Mammary epithelial cell (primary cell): ENCODE measurements at regions of chr1 and their contacts with region 1.

Region 1: GRCh38 chr1:147273409-147274336 is 31.2 kb downstream of the CHD1L start:
- DNase-seq: peak; percentile 79
- H3K4me3 ChIP-seq: no peak overlapping the region
- H3K27ac ChIP-seq: peak overlapping the region; percentile 83
- H3K4me1 ChIP-seq: peaks cover 10% of the 10 kb centered on the region
- H3K27me3 ChIP-seq: no peaks in the 10 kb centered on the region
- CTCF ChIP-seq: peak; percentile 30 to 45

Region 2: DNA sequence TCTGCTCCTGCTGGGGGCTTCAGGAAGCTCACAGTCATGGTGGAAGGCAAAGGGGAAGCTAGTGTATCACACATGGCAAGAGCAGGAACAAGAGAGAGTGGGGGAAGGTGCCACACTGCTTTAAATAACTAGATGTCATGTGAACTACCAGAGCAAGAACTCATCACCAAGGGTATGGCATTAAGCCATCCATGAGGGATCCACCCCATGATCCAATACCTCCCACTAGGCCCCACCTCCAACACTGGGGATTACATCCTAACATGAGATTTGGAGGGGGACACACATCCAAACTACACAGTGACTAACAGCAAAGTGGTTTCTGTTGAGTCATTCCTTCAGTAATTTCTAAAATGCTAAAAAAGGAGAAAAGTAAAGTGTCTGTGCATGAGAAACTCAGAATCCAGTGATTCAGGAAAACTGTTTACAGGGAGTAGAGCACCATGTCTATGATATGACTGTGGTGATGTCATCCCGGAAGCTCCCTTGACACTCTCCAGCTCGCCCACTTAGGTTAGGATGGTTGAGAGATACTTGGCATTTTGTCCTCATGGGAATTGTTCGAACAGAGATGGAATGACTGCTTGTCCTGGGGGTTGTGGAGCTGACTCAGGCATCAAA is 19.1 kb after region 1 on chr1:
- CTCF ChIA-PET with region 1: no interaction called
- dilution Hi-C with region 1: no loop called
- in situ Hi-C with region 1: no loop called
- intact Hi-C with region 1: loop called (anchors 1 kb)
- DNase-seq: peak; percentile 82
- H3K4me3 ChIP-seq: no peak overlapping the region
- H3K27ac ChIP-seq: peak overlapping the region; percentile 66
- H3K4me1 ChIP-seq: peaks cover 8% of the 10 kb centered on the region
- H3K27me3 ChIP-seq: no peaks in the 10 kb centered on the region
- CTCF ChIP-seq: no peak

Region 3: GRCh38 chr1:147389532-147390524 is 116.2 kb after region 1 on chr1:
- CTCF ChIA-PET with region 1: interaction called, 3 read pairs
- dilution Hi-C with region 1: no loop called
- in situ Hi-C with region 1: no loop called
- intact Hi-C with region 1: loop called (anchors 1 kb)
- DNase-seq: peak; percentile 35
- H3K4me3 ChIP-seq: no peak overlapping the region
- H3K27ac ChIP-seq: no peak overlapping the region
- H3K4me1 ChIP-seq: no peaks in the 10 kb centered on the region
- H3K27me3 ChIP-seq: peaks cover 2% of the 10 kb centered on the region
- CTCF ChIP-seq: peak; percentile 59 to 80